SK-N-SH (cell line): ENCODE measurements at regions of chr4 and their contacts with region 1.

Region 1: GRCh38 chr4:173025131-173025530 is 143.5 kb upstream of the GALNT7 start:
- DNase-seq: peak; percentile 60
- H3K4me3 ChIP-seq: no peak overlapping the region
- H3K27ac ChIP-seq: no peak overlapping the region
- H3K4me1 ChIP-seq: peaks cover 4 to 12% of the 10 kb centered on the region in 2 experiments; a peak in 3 of 4 replicates
- H3K27me3 ChIP-seq: no peaks in the 10 kb centered on the region
- CTCF ChIP-seq: peak; percentile 80
- EP300 ChIP-seq: no peak
- RAD21 ChIP-seq: peak; percentile 88

Region 2: DNA sequence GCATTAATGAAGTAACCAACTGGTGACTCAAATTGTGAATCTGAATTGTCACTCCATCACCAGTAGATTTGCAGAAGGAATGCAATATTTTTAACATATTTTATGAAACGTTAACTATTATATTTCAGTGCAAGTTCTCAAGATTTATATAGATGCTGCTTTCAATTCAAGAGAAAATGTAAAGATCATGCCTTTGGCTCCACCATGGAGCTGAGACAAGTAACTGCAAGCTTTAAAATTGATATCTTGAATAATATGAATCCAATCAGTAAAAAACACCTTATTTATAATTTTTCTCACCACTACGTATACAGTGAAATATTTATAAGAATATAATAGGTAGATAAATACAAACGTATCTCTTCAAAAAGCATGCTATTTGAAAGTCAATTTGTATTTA is 1239.7 kb before region 1 on chr4:
- CTCF ChIA-PET with region 1: no interaction called
- POLR2A ChIA-PET with region 1: no interaction called
- DNase-seq: no peak
- H3K4me3 ChIP-seq: no peak overlapping the region
- H3K27ac ChIP-seq: no peak overlapping the region
- H3K4me1 ChIP-seq: no peaks in the 10 kb centered on the region
- H3K27me3 ChIP-seq: no peaks in the 10 kb centered on the region
- CTCF ChIP-seq: no peak; the same call in 1 of the 2 replicates
- EP300 ChIP-seq: no peak
- RAD21 ChIP-seq: peak; percentile 49; the same call in 1 of the 2 replicates

Region 3: GRCh38 chr4:173168396-173169177 is 143.5 kb after region 1 on chr4 and contains the start of gene GALNT7:
- CTCF ChIA-PET with region 1: interaction called, 23 read pairs
- POLR2A ChIA-PET with region 1: no interaction called
- DNase-seq: peak; percentile 92
- H3K4me3 ChIP-seq: peak within 1 kb of the TSS; percentile 66 to 99
- H3K27ac ChIP-seq: peak within 1 kb of the TSS; percentile 83 to 96
- H3K4me1 ChIP-seq: peaks cover 10 to 16% of the 10 kb centered on the region in 2 experiments; a peak in 3 of 4 replicates
- H3K27me3 ChIP-seq: no peaks in the 10 kb centered on the region
- CTCF ChIP-seq: no peak
- EP300 ChIP-seq: no peak
- RAD21 ChIP-seq: no peak
- polyA plus RNA-seq, gene GALNT7: 14.8 and 20.0 TPM in 2 replicates

Region 4: GRCh38 chr4:173264684-173265185 is 239.6 kb after region 1 on chr4:
- CTCF ChIA-PET with region 1: interaction called, 12 read pairs
- POLR2A ChIA-PET with region 1: no interaction called
- DNase-seq: peak; percentile 36
- H3K4me3 ChIP-seq: no peak overlapping the region; a peak in 1 of 4 replicates
- H3K27ac ChIP-seq: peak overlapping the region in 1 of 2 experiments; percentile 77; a peak in 2 of 4 replicates
- H3K4me1 ChIP-seq: peaks cover 8 to 23% of the 10 kb centered on the region in 2 experiments; a peak in 3 of 4 replicates
- H3K27me3 ChIP-seq: no peaks in the 10 kb centered on the region
- CTCF ChIP-seq: no peak
- EP300 ChIP-seq: no peak
- RAD21 ChIP-seq: no peak